ENCODE measurements at regions of chr11 and their contacts with region 1.

Region 1: DNA sequence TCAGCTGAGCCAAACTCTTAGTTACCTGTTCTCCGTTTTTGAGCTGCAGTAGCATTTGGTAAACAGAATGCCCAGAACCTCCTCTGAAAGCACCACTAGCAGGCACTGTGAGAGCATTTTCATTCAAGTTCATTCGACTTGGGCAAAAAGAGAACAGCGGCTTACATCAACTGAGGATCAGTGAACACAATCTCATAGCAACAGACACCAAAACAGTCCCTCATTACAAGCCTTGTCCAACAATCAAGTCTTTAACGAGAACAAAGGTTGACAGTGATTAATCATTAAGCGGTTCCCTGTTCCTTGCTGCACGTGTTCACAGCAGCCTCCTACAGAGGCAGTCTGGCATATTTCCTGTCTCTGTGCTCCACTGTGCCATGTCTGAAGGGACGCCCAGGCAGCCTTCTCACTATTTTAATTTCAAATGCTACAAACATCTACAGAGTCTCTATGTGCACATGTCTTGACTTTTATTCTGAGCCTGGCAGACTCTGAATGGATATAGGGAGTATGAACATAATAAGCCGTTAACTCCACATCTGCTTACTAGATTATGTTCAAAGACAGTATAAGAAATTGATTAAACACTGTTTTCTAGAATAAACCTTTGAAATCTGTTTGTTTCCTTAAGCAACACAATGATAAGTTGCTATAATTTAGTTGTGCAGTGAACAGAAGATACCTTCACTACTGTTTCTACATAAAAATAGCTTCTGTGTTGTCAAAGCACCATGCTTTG is 88.3 kb upstream of the MTMR2 start:
- DNase-seq: peak; percentile 67
- H3K4me3 Mint-ChIP-seq: peak overlapping the region; percentile 52
- H3K27ac Mint-ChIP-seq: peak overlapping the region; percentile 72
- H3K4me1 Mint-ChIP-seq: peaks cover 69% of the 10 kb centered on the region
- H3K27me3 Mint-ChIP-seq: no peaks in the 10 kb centered on the region

Region 2: DNA sequence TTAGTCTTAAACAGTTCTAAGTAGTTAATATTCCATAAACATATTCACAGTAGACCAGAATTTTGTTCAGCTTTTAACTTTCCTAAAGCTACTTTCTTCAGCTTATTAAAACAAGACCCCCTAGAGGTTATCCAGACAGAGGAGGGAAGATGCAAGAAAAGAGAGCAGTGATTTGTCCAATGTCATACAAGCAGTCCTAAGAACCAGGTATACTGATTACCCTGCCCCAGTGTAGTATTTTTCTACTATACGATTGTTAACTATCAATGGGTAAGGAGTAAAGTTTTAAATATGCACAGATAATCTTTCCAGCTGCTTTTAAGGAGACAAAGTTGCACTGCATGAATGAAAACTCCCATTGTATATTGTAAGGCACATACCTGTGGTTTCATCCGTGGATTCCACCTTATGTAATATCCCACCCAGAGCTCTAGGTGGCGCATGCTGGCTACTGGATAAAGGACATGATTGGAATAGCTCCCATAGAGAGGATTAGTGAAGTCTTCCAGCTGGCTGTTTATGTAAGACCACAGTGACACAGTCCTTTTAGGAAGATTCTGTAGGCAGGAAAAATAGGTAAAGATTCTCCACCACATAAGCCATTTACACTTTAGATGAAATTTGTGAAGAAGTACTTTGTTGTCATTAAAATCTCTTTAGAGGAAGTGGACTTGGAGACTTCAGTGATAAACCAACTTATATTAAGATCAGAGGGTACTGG is 176.3 kb before region 1 on chr11:
- CTCF ChIA-PET with region 1: no interaction called
- intact Hi-C with region 1: loop called (anchors 5 kb)
- DNase-seq: peak; percentile 77
- H3K4me3 Mint-ChIP-seq: no peak overlapping the region
- H3K27ac Mint-ChIP-seq: no peak overlapping the region
- H3K4me1 Mint-ChIP-seq: peaks cover 4% of the 10 kb centered on the region
- H3K27me3 Mint-ChIP-seq: no peaks in the 10 kb centered on the region

Region 3: DNA sequence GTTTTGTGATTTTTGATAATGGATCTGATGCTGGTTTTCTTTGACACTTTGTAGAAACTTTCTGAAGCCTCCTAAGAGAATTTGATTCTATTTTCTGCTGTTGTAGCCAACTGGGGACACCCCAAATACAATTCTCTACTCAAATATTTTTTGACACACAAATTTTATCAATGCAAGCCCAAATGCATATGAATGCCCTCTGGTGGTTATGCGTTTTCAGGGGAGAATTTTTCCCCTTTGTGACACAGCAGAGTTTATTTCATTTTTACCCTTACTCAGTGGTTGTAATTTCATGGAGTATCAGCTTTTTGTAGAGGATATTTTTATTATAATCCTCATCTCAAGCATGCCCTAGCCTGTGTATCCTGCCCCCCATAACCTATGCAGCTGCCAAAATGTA is 43.7 kb before region 1 on chr11:
- CTCF ChIA-PET with region 1: no interaction called
- intact Hi-C with region 1: no loop called
- DNase-seq: no peak
- H3K4me3 Mint-ChIP-seq: no peak overlapping the region
- H3K27ac Mint-ChIP-seq: no peak overlapping the region
- H3K4me1 Mint-ChIP-seq: no peaks in the 10 kb centered on the region
- H3K27me3 Mint-ChIP-seq: no peaks in the 10 kb centered on the region

Region 4: DNA sequence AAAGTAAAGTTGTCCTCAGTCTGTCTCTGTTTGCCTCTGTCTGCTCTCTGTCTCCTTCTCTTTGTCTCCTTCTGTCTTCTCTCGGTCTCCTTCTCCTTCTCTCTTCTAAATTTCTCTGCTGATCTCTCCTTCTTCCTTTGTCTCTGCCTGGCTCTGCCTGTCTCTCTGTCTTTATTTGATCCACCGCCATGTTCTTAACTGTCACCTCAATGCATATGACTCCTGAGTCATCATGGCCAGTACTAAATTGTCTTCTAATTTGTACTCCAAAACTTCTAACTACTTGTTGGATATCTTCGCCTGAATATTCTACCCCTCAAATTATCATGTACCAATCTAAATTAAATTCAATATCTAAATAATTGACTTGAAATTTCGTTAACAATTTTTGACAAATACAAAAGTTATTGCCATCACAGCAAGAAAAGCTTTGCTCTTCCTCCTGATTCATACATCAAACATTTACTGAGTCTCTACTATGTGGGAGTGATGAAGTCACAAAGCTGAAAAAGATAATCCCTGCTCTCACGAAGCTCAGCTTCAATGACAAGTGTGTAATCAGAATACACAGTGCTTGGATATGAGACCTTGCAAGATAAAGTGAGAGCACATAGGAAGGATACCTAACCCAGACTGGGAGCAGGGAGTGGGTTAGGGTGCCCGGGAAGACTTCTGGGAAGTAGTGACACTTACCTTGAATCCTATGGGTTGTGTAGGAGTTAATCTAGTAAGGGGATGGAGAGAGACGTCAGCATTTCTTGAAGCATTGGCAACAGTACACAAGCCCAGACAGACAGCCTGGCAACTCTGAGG is 137.7 kb after region 1 on chr11:
- CTCF ChIA-PET with region 1: no interaction called
- intact Hi-C with region 1: loop called (anchors 1 kb)
- DNase-seq: no peak
- H3K4me3 Mint-ChIP-seq: no peak overlapping the region
- H3K27ac Mint-ChIP-seq: no peak overlapping the region
- H3K4me1 Mint-ChIP-seq: peaks cover 59% of the 10 kb centered on the region
- H3K27me3 Mint-ChIP-seq: no peaks in the 10 kb centered on the region

Region 5: GRCh38 chr11:96197801-96198701 is 185.8 kb after region 1 on chr11:
- CTCF ChIA-PET with region 1: no interaction called
- intact Hi-C with region 1: loop called (anchors 1 kb)
- DNase-seq: no peak
- H3K4me3 Mint-ChIP-seq: no peak overlapping the region
- H3K27ac Mint-ChIP-seq: peak overlapping the region; percentile 85
- H3K4me1 Mint-ChIP-seq: peaks cover 88% of the 10 kb centered on the region
- H3K27me3 Mint-ChIP-seq: no peaks in the 10 kb centered on the region

Region 6: GRCh38 chr11:96254087-96254486 is 241.8 kb after region 1 on chr11:
- CTCF ChIA-PET with region 1: interaction called, 3 read pairs
- intact Hi-C with region 1: loop called (anchors 5 kb)
- DNase-seq: peak; percentile 49
- H3K4me3 Mint-ChIP-seq: peak overlapping the region; percentile 58
- H3K27ac Mint-ChIP-seq: peak overlapping the region; percentile 77
- H3K4me1 Mint-ChIP-seq: peaks cover 89% of the 10 kb centered on the region
- H3K27me3 Mint-ChIP-seq: no peaks in the 10 kb centered on the region

Region 7: GRCh38 chr11:96328395-96329010 is 316.2 kb after region 1 on chr11:
- CTCF ChIA-PET with region 1: no interaction called
- intact Hi-C with region 1: no loop called
- DNase-seq: no peak
- H3K4me3 Mint-ChIP-seq: no peak overlapping the region
- H3K27ac Mint-ChIP-seq: peak overlapping the region; percentile 82
- H3K4me1 Mint-ChIP-seq: peaks cover 83% of the 10 kb centered on the region
- H3K27me3 Mint-ChIP-seq: no peaks in the 10 kb centered on the region

Measured in activated naive CD4-positive, alpha-beta T cell treated with anti-CD3 and anti-CD28 coated beads for 36 hours (primary cell).